Mucosa of descending colon (tissue), 3 donors: ENCODE measurements at regions of chr19 and their contacts with region 1.

Region 1: DNA sequence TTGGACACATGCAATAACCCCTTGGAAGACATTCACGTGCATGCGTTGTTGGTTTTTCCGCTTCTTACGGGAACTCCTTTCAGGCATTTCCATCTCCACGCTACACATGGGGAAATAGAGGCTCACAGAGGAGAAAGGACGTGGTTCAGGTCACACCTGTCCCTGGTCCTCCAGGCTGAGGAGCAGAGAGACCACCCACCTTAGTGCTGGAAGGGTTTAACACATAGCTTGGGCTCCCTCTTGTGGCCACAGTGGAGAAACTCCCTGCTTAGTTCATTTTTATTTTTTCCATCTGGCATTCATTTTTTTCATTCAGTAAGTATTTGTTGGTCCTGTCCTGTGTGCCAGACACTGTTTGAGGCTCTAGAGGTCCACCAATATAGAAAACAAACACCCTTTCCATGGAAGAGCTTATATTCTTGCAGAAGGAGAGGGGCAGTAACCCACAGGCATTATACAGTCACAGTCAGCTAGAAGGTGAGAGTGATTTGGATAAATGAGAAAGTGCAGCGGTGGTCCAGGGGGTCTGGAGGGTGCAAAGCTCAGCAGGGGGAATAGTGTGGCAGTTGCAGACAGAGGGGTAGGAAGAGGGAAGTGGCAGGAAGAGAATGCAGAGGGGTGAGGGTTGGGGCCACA is 24.2 kb upstream of the TTYH1 start:
- DNase-seq: peak in 1 of 3 donors; percentile 46
- ATAC-seq: peak; percentile 48
- H3K4me3 ChIP-seq: no peak overlapping the region
- H3K4me1 ChIP-seq: no peaks in the 10 kb centered on the region
- CTCF ChIP-seq: peak; percentile 61

Region 2: GRCh38 chr19:54339646-54340358 is 51.3 kb before region 1 on chr19:
- intact Hi-C with region 1: loop called in 1 of 2 experiments (anchors 10 kb)
- DNase-seq: no peak
- ATAC-seq: peak; percentile 44
- H3K4me3 ChIP-seq: no peak overlapping the region
- H3K4me1 ChIP-seq: no peaks in the 10 kb centered on the region
- CTCF ChIP-seq: no peak